ENCODE measurements at regions of chr12 and their contacts with region 1.

Region 1: GRCh38 chr12:62361048-62361447 is 100.8 kb downstream of the USP15 start:
- DNase-seq: no peak
- ATAC-seq: no peak
- H3K4me3 Mint-ChIP-seq: no peak overlapping the region
- H3K27ac Mint-ChIP-seq: no peak overlapping the region
- H3K4me1 Mint-ChIP-seq: peaks cover 13% of the 10 kb centered on the region
- H3K27me3 Mint-ChIP-seq: no peaks in the 10 kb centered on the region
- CTCF ChIP-seq: no peak

Region 2: GRCh38 chr12:62372137-62372536 is 11.1 kb after region 1 on chr12:
- CTCF ChIA-PET with region 1: no interaction called
- POLR2A ChIA-PET with region 1: no interaction called
- intact Hi-C with region 1: loop called (anchors 2 kb)
- DNase-seq: no peak
- ATAC-seq: no peak
- H3K4me3 Mint-ChIP-seq: no peak overlapping the region
- H3K27ac Mint-ChIP-seq: no peak overlapping the region
- H3K4me1 Mint-ChIP-seq: peaks cover 12% of the 10 kb centered on the region
- H3K27me3 Mint-ChIP-seq: no peaks in the 10 kb centered on the region
- CTCF ChIP-seq: no peak